GM10248 (cell line): ENCODE measurements at regions of chr10 and their contacts with region 1.

Region 1: DNA sequence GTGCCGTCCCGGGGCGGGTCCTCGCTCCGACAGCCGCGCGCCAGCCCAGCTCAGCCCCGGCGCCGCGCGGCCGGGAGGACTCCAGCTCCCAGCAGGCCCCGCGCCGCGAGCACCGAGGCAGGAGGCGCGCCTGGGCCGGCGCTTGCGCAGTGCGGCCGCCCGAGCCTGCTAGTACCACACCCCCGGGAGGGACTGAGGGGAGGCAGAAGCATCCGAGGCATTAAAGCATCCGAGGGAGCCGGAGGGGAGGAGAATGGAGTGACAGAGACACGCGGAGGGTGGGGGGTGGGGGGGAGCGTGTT is at the start of gene GRK5:
- DNase-seq: peak; percentile 97
- CTCF ChIP-seq: no peak

Region 2: DNA sequence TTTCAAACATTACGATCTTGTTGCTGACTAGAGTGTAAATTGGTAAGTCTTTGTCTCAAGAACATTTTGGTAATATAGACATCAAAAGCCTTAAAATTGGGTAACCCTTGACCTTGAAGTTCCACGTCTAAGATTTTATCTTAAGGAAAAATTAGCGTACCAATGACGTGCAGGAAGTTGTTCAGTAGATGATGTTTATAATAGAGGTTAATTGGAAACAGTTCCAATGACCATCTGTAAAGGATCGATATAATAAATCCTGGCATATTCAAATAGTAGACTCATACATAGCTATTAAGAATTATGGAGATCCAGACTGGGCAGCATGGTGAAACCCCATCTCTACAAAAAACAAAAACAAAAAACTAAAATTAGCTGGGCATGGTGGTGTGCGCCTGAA is 20.5 kb after region 1 on chr10:
- CTCF ChIA-PET with region 1: interaction called, 14 read pairs
- POLR2A ChIA-PET with region 1: interaction called, 6 read pairs
- DNase-seq: no peak
- CTCF ChIP-seq: no peak

Region 3: GRCh38 chr10:119270762-119271366 is 63.5 kb after region 1 on chr10:
- CTCF ChIA-PET with region 1: interaction called, 12 read pairs
- POLR2A ChIA-PET with region 1: no interaction called
- DNase-seq: peak; percentile 70
- CTCF ChIP-seq: no peak

Region 4: GRCh38 chr10:119305860-119306513 is 98.7 kb after region 1 on chr10:
- CTCF ChIA-PET with region 1: interaction called, 43 read pairs
- POLR2A ChIA-PET with region 1: interaction called, 6 read pairs
- DNase-seq: peak; percentile 75
- CTCF ChIP-seq: no peak

Region 5: DNA sequence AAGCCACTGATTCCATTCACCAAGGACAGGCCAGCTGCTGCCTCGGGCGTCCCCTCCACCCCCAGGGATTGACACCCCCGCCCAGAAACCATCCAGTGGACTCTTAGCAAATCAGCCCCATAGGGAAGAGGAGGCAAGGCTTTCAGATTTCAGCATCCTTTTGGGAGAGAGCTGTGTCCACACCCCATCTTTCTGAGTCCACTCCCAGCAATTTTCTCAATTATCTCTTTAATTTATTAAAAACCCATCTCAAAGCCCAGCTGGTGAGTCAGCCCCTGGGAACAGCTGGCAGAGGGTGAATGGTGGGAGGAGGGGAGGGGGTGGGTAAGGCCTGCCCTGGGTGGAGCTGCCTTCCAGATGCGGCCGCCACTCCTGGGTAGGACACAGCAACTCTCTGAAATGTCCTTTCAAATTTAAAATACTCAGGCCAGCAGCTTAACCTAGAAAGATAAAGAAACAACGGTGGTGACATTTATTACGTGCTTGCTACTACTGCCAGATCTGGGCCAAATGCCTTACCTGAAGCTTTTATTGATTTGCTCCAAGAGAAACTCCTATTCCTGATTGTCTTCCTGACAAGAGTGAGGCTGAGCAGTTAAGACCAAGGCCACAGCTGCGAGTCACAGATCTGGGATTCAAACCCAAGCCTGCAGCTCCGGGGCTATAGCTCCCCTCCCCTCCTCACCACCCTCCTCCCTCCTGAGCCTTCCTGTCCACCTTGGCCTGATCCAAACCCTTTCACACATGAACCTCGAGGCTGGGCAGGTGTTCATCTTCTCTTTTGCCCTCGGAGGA is 214.8 kb after region 1 on chr10:
- CTCF ChIA-PET with region 1: interaction called, 36 read pairs
- POLR2A ChIA-PET with region 1: no interaction called
- DNase-seq: no peak
- CTCF ChIP-seq: no peak

Region 6: GRCh38 chr10:119457966-119458766 is 250.8 kb after region 1 on chr10:
- CTCF ChIA-PET with region 1: interaction called, 10 read pairs
- POLR2A ChIA-PET with region 1: no interaction called
- DNase-seq: no peak
- CTCF ChIP-seq: no peak

Region 7: GRCh38 chr10:119517235-119518141 is 310.2 kb after region 1 on chr10:
- CTCF ChIA-PET with region 1: interaction called, 11 read pairs
- POLR2A ChIA-PET with region 1: interaction called, 3 read pairs
- DNase-seq: peak; percentile 66
- CTCF ChIP-seq: no peak